Endothelial cell of umbilical vein (primary cell): ENCODE measurements at regions of chr4 and their contacts with region 1.

Region 1: DNA sequence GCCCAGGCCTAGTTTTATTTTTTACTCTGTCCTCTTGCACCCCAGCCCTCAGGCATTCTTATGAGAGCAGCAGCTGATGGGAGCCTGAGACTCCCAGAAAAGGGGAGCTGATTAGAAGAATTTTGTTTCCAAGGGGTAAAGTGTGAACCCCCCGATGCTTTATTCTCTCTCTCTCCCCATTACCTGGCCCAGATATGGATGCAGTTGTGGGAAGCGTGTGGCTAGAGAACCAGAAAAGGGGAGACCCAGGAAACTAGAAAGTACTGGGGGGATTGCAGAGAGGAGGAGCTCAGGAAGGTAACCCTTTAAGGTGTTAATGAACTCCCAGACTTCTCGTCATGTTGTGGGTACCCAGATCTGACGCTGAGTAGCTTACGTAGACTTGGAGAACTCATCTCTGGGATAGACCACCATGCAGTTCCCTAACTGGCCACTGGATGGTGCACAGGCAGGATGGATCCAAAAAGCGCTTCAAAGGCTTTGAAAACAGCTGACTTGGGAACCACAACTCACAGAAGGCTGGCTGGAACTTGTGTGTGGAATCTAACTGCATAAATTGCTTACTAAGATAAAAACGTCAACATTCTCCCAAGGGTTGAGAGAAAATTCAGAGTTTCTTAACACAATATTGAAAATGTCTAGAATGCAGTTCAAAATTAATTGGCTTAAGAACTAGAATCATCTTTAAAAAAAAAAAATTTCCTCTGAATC is 64.7 kb downstream of the TBC1D14 start:
- DNase-seq: peak; percentile 90
- H3K4me3 ChIP-seq: no peak overlapping the region
- H3K27ac ChIP-seq: no peak overlapping the region
- H3K4me1 ChIP-seq: no peaks in the 10 kb centered on the region
- H3K27me3 ChIP-seq: no peaks in the 10 kb centered on the region
- CTCF ChIP-seq: peak; percentile 93 to 95
- POLR2A ChIP-seq: no peak

Region 2: GRCh38 chr4:6909073-6909965 is 65.0 kb before region 1 on chr4 and contains the start of gene TBC1D14:
- CTCF ChIA-PET with region 1: interaction called, 6 read pairs
- POLR2A ChIA-PET with region 1: no interaction called
- dilution Hi-C with region 1: no loop called
- intact Hi-C with region 1: loop called (anchors 5 kb)
- DNase-seq: peak; percentile 85
- H3K4me3 ChIP-seq: peak within 1 kb of the TSS; percentile 65 to 80 (median 73)
- H3K27ac ChIP-seq: peak within 1 kb of the TSS; percentile 91
- H3K4me1 ChIP-seq: peaks cover 16% of the 10 kb centered on the region
- H3K27me3 ChIP-seq: peaks cover 0 to 9% of the 10 kb centered on the region in 2 experiments
- CTCF ChIP-seq: peak in 1 of 2 donors; percentile 23
- POLR2A ChIP-seq: peak; percentile 56
- total RNA-seq, gene TBC1D14: 23.3 and 24.8 TPM in 2 replicates

Region 3: GRCh38 chr4:6942238-6942800 is 32.0 kb before region 1 on chr4:
- CTCF ChIA-PET with region 1: interaction called, 16 read pairs
- POLR2A ChIA-PET with region 1: no interaction called
- dilution Hi-C with region 1: no loop called
- intact Hi-C with region 1: no loop called
- DNase-seq: peak; percentile 79
- H3K4me3 ChIP-seq: no peak overlapping the region
- H3K27ac ChIP-seq: no peak overlapping the region
- H3K4me1 ChIP-seq: peaks cover 21% of the 10 kb centered on the region
- H3K27me3 ChIP-seq: no peaks in the 10 kb centered on the region
- CTCF ChIP-seq: no peak
- POLR2A ChIP-seq: no peak

Region 4: GRCh38 chr4:6963139-6963611 is 11.1 kb before region 1 on chr4:
- CTCF ChIA-PET with region 1: interaction called, 19 read pairs
- POLR2A ChIA-PET with region 1: no interaction called
- dilution Hi-C with region 1: no loop called
- intact Hi-C with region 1: no loop called
- DNase-seq: peak; percentile 33
- H3K4me3 ChIP-seq: no peak overlapping the region
- H3K27ac ChIP-seq: no peak overlapping the region
- H3K4me1 ChIP-seq: peaks cover 7% of the 10 kb centered on the region
- H3K27me3 ChIP-seq: no peaks in the 10 kb centered on the region
- CTCF ChIP-seq: no peak
- POLR2A ChIP-seq: no peak

Region 5: GRCh38 chr4:7067452-7068278 is 93.4 kb after region 1 on chr4 and contains the start of gene GRPEL1:
- CTCF ChIA-PET with region 1: interaction called, 79 read pairs
- POLR2A ChIA-PET with region 1: no interaction called
- dilution Hi-C with region 1: no loop called
- intact Hi-C with region 1: loop called (anchors 1 kb)
- DNase-seq: peak; percentile 100
- H3K4me3 ChIP-seq: peak within 1 kb of the TSS; percentile 62 to 99 (median 71)
- H3K27ac ChIP-seq: peak within 1 kb of the TSS; percentile 57
- H3K4me1 ChIP-seq: peaks cover 20% of the 10 kb centered on the region
- H3K27me3 ChIP-seq: peaks cover 0 to 3% of the 10 kb centered on the region in 2 experiments
- CTCF ChIP-seq: no peak
- POLR2A ChIP-seq: peak; percentile 94
- total RNA-seq, gene GRPEL1: 42.6 and 47.3 TPM in 2 replicates